Activated CD4-positive, alpha-beta T cell treated with anti-CD3 and anti-CD28 coated beads for 36 hours (primary cell): ENCODE measurements at regions of chr3 and their contacts with region 1.

Region 1: GRCh38 chr3:45864760-45865519 is 21.4 kb upstream of the CCR9 start:
- DNase-seq: peak; percentile 55
- ATAC-seq: peak; percentile 71
- H3K4me3 Mint-ChIP-seq: no peak overlapping the region
- H3K27ac Mint-ChIP-seq: no peak overlapping the region
- H3K4me1 Mint-ChIP-seq: peaks cover 46% of the 10 kb centered on the region
- H3K27me3 Mint-ChIP-seq: peaks cover 52% of the 10 kb centered on the region

Region 2: GRCh38 chr3:45841757-45842491 is 23.0 kb before region 1 on chr3 and contains the start of gene LZTFL1:
- CTCF ChIA-PET with region 1: interaction called, 7 read pairs
- POLR2A ChIA-PET with region 1: no interaction called
- intact Hi-C with region 1: loop called (anchors 1 to 2 kb)
- DNase-seq: peak; percentile 94
- ATAC-seq: peak; percentile 89
- H3K4me3 Mint-ChIP-seq: peak within 1 kb of the TSS; percentile 87
- H3K27ac Mint-ChIP-seq: peak within 1 kb of the TSS; percentile 82
- H3K4me1 Mint-ChIP-seq: peaks cover 14% of the 10 kb centered on the region
- H3K27me3 Mint-ChIP-seq: no peaks in the 10 kb centered on the region
- total RNA-seq, gene LZTFL1: 4.5 to 6.6 TPM

Region 3: DNA sequence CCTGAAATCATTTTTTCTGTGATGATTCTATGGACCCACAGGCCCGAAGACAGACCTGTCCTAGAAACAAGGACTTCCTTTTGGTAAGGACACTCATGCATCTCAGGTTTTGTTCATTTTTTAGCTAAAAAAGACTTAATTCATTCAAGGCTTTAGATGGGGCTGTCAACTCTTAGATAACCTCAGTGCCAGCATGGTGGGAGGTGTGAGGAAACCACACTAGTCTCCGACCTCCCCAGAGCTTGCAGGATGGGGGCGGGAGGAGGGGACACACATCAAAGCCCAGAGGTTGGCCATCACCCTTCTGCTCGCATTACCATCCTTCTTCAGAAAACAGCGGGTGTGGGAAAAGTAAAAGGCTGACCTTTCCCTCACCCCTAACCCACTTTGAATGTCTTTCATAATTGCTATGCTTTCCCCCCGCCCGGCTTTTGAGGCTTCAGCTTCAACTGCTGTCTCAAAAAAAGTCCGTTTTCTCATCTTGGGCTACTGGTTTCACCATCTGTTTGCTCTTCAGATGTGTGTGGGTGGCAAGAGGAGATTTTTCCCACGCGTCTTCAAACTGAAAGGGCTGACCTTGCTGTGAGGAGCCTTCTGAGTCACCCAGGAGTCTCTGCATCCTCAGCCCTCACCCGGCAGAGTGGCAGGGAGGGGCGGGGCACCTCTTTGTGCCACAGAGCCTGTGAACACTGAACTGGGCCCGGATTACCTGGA is 50.7 kb after region 1 on chr3:
- CTCF ChIA-PET with region 1: interaction called, 3 read pairs
- POLR2A ChIA-PET with region 1: interaction called, 6 read pairs
- intact Hi-C with region 1: loop called (anchors 1 kb)
- DNase-seq: peak; percentile 88
- ATAC-seq: peak; percentile 94
- H3K4me3 Mint-ChIP-seq: peak overlapping the region; percentile 22
- H3K27ac Mint-ChIP-seq: peak overlapping the region; percentile 37
- H3K4me1 Mint-ChIP-seq: peaks cover 33% of the 10 kb centered on the region
- H3K27me3 Mint-ChIP-seq: peaks cover 33% of the 10 kb centered on the region

Region 4: GRCh38 chr3:46059432-46059831 is 194.5 kb after region 1 on chr3:
- CTCF ChIA-PET with region 1: no interaction called
- POLR2A ChIA-PET with region 1: no interaction called
- intact Hi-C with region 1: no loop called
- DNase-seq: no peak
- ATAC-seq: no peak
- H3K4me3 Mint-ChIP-seq: no peak overlapping the region
- H3K27ac Mint-ChIP-seq: no peak overlapping the region
- H3K4me1 Mint-ChIP-seq: peaks cover 18% of the 10 kb centered on the region
- H3K27me3 Mint-ChIP-seq: peaks cover 63% of the 10 kb centered on the region

Region 5: DNA sequence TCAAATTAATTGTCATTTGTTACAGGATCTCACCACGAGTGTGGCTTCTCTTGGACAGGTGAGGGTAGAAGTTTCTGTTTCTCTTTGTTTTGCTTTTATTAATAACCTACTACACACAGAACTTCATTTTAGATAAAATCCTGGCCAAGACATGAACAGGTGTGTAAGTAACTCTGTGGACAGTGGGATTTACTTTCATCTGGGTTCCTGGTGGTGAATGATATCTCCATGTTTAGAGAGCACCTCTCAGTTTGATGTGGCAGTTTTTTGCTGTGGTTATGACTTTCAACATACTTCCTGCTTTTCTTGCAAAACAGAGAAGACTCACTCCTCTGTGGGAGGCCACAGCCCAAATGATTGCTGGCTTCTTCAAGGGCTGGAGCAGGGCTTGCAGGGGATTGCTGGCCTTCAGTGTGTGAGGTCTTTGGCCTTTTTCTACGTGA is 233.4 kb after region 1 on chr3:
- CTCF ChIA-PET with region 1: no interaction called
- POLR2A ChIA-PET with region 1: no interaction called
- intact Hi-C with region 1: loop called (anchors 2 to 5 kb)
- DNase-seq: peak; percentile 73
- ATAC-seq: peak; percentile 76
- H3K4me3 Mint-ChIP-seq: no peak overlapping the region
- H3K27ac Mint-ChIP-seq: peak overlapping the region; percentile 62
- H3K4me1 Mint-ChIP-seq: peaks cover 31% of the 10 kb centered on the region
- H3K27me3 Mint-ChIP-seq: peaks cover 51% of the 10 kb centered on the region